Activated naive CD4-positive, alpha-beta T cell treated with anti-CD3 and anti-CD28 coated beads, Interleukin-2, amount 10 ng/mL, durations not matched to agents 7 days and 5 days (primary cell): ENCODE measurements at regions of chr1 and their contacts with region 1.

Region 1: DNA sequence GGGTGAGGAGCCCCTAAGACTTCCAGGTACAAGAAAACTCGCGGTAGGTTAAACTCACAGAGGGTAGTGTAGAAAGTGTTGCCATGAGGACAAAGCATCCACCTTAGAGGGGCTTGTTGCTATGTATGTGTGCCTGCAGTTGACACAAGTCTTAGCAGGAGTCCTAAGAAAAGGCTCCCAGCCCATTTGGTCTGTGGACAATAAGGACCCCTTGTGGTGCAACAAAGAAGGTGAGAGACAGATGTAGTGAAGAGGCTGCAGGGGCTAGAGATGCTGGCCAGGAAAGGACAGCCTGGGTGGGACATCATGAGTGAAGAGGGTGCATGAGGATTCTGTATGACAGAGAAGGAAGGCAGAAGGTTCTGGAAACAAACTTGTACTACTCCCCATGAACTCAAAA is 36.3 kb upstream of the IL10 start:
- DNase-seq: peak; percentile 66
- H3K4me3 Mint-ChIP-seq: no peak overlapping the region
- H3K27ac Mint-ChIP-seq: no peak overlapping the region
- H3K4me1 Mint-ChIP-seq: peaks cover 46% of the 10 kb centered on the region
- H3K27me3 Mint-ChIP-seq: peaks cover 9% of the 10 kb centered on the region

Region 2: GRCh38 chr1:206030714-206031113 is 777.9 kb before region 1 on chr1:
- CTCF ChIA-PET with region 1: no interaction called
- DNase-seq: peak; percentile 85
- H3K4me3 Mint-ChIP-seq: no peak overlapping the region
- H3K27ac Mint-ChIP-seq: no peak overlapping the region
- H3K4me1 Mint-ChIP-seq: peaks cover 23% of the 10 kb centered on the region
- H3K27me3 Mint-ChIP-seq: peaks cover 62% of the 10 kb centered on the region

Region 3: DNA sequence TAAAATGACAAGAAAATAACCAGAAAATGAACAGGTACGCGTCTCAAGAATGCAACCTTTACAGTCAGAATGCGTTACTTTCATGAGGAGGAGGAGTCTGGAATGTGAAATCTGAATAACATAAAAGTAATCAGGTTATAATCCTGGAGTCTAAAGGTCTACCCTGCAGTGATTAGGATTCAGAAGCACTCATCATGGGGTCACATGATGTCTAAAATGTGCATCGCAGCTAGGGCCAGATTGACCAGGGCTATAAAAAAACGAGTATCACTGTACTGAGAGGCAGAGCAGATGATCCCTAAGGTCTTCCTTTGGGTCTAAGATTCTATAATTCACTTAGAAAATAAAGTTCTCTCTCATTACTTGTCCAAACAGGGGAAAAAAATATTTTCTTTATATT is 203.8 kb before region 1 on chr1:
- CTCF ChIA-PET with region 1: no interaction called
- DNase-seq: no peak
- H3K4me3 Mint-ChIP-seq: no peak overlapping the region
- H3K27ac Mint-ChIP-seq: no peak overlapping the region
- H3K4me1 Mint-ChIP-seq: peaks cover 14% of the 10 kb centered on the region
- H3K27me3 Mint-ChIP-seq: no peaks in the 10 kb centered on the region

Region 4: GRCh38 chr1:206658264-206658980 is 150.2 kb before region 1 on chr1:
- CTCF ChIA-PET with region 1: interaction called, 26 read pairs
- DNase-seq: peak; percentile 70
- H3K4me3 Mint-ChIP-seq: no peak overlapping the region
- H3K27ac Mint-ChIP-seq: no peak overlapping the region
- H3K4me1 Mint-ChIP-seq: peaks cover 12% of the 10 kb centered on the region
- H3K27me3 Mint-ChIP-seq: peaks cover 68% of the 10 kb centered on the region

Region 5: GRCh38 chr1:206734499-206735142 is 74.0 kb before region 1 on chr1:
- CTCF ChIA-PET with region 1: interaction called, 361 read pairs
- DNase-seq: peak; percentile 87
- H3K4me3 Mint-ChIP-seq: no peak overlapping the region
- H3K27ac Mint-ChIP-seq: peak overlapping the region; percentile 14
- H3K4me1 Mint-ChIP-seq: peaks cover 61% of the 10 kb centered on the region
- H3K27me3 Mint-ChIP-seq: peaks cover 8% of the 10 kb centered on the region

Region 6: GRCh38 chr1:206856674-206857464 is 48.3 kb after region 1 on chr1:
- CTCF ChIA-PET with region 1: interaction called, 12 read pairs
- DNase-seq: peak; percentile 36
- H3K4me3 Mint-ChIP-seq: no peak overlapping the region
- H3K27ac Mint-ChIP-seq: no peak overlapping the region
- H3K4me1 Mint-ChIP-seq: peaks cover 38% of the 10 kb centered on the region
- H3K27me3 Mint-ChIP-seq: peaks cover 34% of the 10 kb centered on the region

Region 7: GRCh38 chr1:206918076-206918475 is 109.5 kb after region 1 on chr1:
- CTCF ChIA-PET with region 1: interaction called, 216 read pairs
- DNase-seq: no peak
- H3K4me3 Mint-ChIP-seq: no peak overlapping the region
- H3K27ac Mint-ChIP-seq: peak overlapping the region; percentile 46
- H3K4me1 Mint-ChIP-seq: peaks cover 69% of the 10 kb centered on the region
- H3K27me3 Mint-ChIP-seq: no peaks in the 10 kb centered on the region

Region 8: GRCh38 chr1:206982216-206982615 is 173.6 kb after region 1 on chr1:
- CTCF ChIA-PET with region 1: interaction called, 58 read pairs
- DNase-seq: peak; percentile 78
- H3K4me3 Mint-ChIP-seq: no peak overlapping the region
- H3K27ac Mint-ChIP-seq: no peak overlapping the region
- H3K4me1 Mint-ChIP-seq: no peaks in the 10 kb centered on the region
- H3K27me3 Mint-ChIP-seq: peaks cover 60% of the 10 kb centered on the region